ENCODE measurements at regions of chr10 and their contacts with region 1.

Region 1: DNA sequence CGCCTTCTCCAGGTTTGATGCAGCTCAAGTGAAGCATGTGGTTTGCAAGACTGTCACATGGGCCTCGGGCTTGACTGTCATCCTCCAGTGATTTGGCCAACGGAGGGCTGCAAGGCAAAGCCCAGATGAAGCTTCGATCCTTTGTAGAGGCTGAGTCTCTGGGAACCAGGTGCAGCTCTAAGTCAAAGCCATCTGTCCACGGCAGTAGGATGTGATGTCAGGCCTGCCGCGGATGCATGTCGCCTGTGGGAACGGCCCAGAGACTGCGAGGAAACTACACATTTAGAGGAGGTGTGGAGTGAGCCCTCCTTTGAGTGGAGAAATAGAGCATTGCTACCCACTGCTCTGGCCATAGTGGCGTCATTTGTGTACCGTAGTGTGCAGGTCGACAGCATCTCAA is 35.6 kb upstream of the CTBP2 start:
- DNase-seq: no peak
- ATAC-seq: no peak
- H3K4me3 ChIP-seq: no peak overlapping the region
- H3K27ac ChIP-seq: no peak overlapping the region
- H3K4me1 ChIP-seq: no peaks in the 10 kb centered on the region
- H3K27me3 ChIP-seq: peaks cover 0 to 4% (median 0%) of the 10 kb centered on the region in 9 donors
- CTCF ChIP-seq: no peak
- POLR2A ChIP-seq: no peak

Region 2: GRCh38 chr10:125248489-125248888 is 52.6 kb after region 1 on chr10:
- intact Hi-C with region 1: loop called in 1 of 10 experiments (anchors 5 kb)
- DNase-seq: no peak
- ATAC-seq: no peak
- H3K4me3 ChIP-seq: no peak overlapping the region
- H3K27ac ChIP-seq: no peak overlapping the region
- H3K4me1 ChIP-seq: no peaks in the 10 kb centered on the region
- H3K27me3 ChIP-seq: peaks cover 0 to 11% (median 0%) of the 10 kb centered on the region in 9 donors
- CTCF ChIP-seq: no peak
- POLR2A ChIP-seq: no peak

Region 3: GRCh38 chr10:125734823-125735222 is 538.9 kb after region 1 on chr10:
- intact Hi-C with region 1: no loop called
- DNase-seq: no peak
- ATAC-seq: no peak
- H3K4me3 ChIP-seq: no peak overlapping the region
- H3K27ac ChIP-seq: no peak overlapping the region
- H3K4me1 ChIP-seq: peaks cover 0 to 20% (median 0%) of the 10 kb centered on the region in 12 donors
- H3K27me3 ChIP-seq: no peaks in the 10 kb centered on the region
- CTCF ChIP-seq: no peak
- POLR2A ChIP-seq: no peak

Region 4: DNA sequence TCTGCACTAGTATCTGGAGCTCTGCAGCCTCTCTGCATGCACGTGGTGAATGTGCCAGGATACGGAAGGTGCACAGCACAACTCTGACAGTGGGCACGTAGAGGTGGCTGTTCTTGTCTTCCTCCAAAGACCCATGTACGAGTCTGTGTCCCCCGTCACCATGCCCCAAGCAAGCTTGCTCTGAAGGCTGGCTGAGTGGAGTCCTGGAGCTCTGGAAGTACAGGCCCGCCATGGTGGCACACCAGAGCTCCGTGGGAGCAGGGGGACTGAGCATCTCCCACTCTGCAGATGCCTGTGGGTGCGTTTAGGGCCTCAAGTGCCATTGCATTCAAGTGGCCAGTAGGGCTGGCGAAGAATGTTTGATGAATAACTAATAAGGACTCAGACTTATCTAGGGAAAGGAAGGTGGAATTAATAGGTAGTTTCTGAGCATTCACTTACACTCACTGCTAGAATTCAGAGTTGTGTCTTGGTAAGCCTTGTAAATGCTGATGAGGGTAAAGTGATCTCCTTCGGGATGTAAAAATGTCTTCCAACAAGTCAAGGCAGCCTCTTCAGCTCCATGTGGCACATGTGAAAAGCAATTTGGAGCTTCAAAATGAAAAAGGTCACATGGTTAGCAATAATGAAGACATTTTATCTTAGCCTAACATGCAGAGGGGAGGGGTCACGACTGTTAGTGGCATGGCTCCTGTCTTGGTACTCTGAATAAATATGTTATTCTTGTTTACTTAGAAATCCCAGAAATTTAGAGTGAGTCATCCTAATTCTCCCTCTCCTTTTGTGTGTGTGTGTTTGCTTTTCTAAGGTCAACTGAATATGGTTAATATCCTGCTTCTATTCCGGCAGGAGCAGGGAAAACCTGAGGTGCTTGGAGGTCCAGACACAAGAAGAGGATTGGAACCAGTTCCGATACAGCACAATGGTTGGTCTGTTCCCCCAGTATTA is 644.8 kb after region 1 on chr10:
- intact Hi-C with region 1: no loop called
- DNase-seq: peak in 1 of 5 donors; percentile 55
- ATAC-seq: no peak
- H3K4me3 ChIP-seq: no peak overlapping the region
- H3K27ac ChIP-seq: no peak overlapping the region
- H3K4me1 ChIP-seq: peaks cover 0 to 19% (median 6%) of the 10 kb centered on the region in 12 donors
- H3K27me3 ChIP-seq: no peaks in the 10 kb centered on the region
- CTCF ChIP-seq: no peak
- POLR2A ChIP-seq: no peak

Measured in heart left ventricle (tissue), 16 donors.